H1 (cell line): ENCODE measurements at regions of chr5 and their contacts with region 1.

Region 1: GRCh38 chr5:31825518-31826068 is 186.7 kb downstream of the PDZD2 start:
- DNase-seq: peak in 1 of 2 experiments; percentile 63
- H3K4me3 ChIP-seq: no peak overlapping the region
- H3K27ac ChIP-seq: no peak overlapping the region
- H3K4me1 ChIP-seq: no peaks in the 10 kb centered on the region
- H3K27me3 ChIP-seq: no peaks in the 10 kb centered on the region
- CTCF ChIP-seq: peak in 2 of 3 experiments; percentile 68 to 75; a peak in 3 of 4 replicates
- EP300 ChIP-seq: no peak
- POLR2A ChIP-seq: no peak
- RAD21 ChIP-seq: peak; percentile 82 to 90

Region 2: DNA sequence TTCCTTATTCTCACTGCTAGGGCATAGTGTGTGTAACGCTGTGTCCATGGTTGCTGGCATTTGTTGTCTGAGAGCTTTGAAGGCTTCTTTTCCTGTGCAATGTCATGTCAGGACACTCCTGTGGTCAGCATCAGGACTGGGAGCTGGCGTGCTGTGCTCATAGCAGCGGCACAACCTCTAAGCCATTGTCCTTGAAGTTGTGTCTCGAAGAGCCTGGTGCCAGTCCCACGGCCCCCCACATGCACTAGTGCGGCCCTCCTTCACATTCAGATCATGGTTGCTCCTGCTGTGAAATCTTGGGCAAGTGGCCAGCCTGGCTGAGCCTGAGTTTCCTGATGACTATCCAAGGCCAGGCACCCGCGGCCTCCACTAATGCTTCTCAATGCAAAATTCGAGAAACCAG is 154.3 kb before region 1 on chr5:
- CTCF ChIA-PET with region 1: interaction called, 10 read pairs
- POLR2A ChIA-PET with region 1: no interaction called
- DNase-seq: no peak
- H3K4me3 ChIP-seq: no peak overlapping the region
- H3K27ac ChIP-seq: no peak overlapping the region
- H3K4me1 ChIP-seq: peaks cover 2 to 8% (median 3%) of the 10 kb centered on the region in 4 experiments; a peak in 6 of 7 replicates
- H3K27me3 ChIP-seq: no peaks in the 10 kb centered on the region
- CTCF ChIP-seq: no peak
- EP300 ChIP-seq: no peak
- POLR2A ChIP-seq: peak in 1 of 2 experiments; percentile 53; a peak in 1 of 3 replicates
- RAD21 ChIP-seq: no peak

Region 3: DNA sequence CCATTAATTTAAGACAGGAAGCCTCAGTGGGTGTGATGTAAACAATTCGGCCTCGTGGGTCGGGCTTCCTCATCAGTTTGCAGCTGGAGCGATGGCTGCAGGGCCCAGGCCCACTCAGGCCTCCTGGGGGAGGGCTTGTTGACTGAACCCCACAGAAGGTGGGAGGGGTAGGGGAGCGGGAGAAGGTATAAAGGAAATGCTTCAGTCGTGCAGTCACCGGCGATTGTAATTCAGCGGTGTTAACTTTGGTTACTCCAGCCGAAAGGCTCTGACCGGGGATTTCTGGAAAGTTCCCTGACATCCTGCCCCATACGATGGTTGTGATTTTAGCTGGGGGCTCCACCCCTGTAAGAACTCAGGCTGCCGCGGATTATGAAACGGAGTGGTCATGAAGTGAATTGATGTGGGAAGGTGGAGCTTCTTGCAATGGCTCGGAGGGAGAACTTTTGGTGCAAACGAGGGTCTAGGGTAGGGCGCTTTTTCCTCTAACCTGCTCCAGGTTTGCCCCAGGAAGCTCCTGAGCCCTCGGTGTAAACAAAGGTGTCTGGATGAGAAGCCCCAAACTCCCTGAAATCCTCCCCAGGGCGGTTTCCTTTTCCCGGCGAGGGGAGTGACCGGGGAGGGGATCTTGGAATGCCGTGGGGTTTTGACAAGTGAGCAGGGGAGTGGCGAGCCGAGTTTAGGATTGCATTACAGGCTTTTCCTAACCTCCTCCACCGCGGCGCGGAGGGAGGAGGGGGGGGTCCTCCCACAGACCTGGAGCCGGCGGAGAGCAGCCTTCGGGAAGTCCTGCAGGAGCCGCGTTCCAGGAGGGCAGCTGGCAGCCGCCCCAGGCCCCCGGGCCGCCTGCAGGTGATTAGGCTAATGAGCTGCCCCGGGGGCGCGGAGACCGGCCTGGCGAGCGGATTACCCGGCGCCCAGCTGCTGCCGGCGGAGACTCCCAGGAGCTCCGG is 28.9 kb after region 1 on chr5:
- CTCF ChIA-PET with region 1: interaction called, 42 read pairs
- POLR2A ChIA-PET with region 1: interaction called, 3 read pairs
- DNase-seq: peak; percentile 38 to 82
- H3K4me3 ChIP-seq: peak overlapping the region; percentile 54 to 79 (median 70)
- H3K27ac ChIP-seq: 0 out of 2 replicates have a peak overlapping the region, but pooled peaks have one; percentile 31
- H3K4me1 ChIP-seq: peaks cover 2 to 15% (median 10%) of the 10 kb centered on the region in 4 experiments; a peak in 5 of 7 replicates
- H3K27me3 ChIP-seq: no peaks in the 10 kb centered on the region
- CTCF ChIP-seq: no peak
- EP300 ChIP-seq: no peak
- POLR2A ChIP-seq: peak in 1 of 2 experiments; percentile 50; a peak in 2 of 3 replicates
- RAD21 ChIP-seq: no peak

Region 4: DNA sequence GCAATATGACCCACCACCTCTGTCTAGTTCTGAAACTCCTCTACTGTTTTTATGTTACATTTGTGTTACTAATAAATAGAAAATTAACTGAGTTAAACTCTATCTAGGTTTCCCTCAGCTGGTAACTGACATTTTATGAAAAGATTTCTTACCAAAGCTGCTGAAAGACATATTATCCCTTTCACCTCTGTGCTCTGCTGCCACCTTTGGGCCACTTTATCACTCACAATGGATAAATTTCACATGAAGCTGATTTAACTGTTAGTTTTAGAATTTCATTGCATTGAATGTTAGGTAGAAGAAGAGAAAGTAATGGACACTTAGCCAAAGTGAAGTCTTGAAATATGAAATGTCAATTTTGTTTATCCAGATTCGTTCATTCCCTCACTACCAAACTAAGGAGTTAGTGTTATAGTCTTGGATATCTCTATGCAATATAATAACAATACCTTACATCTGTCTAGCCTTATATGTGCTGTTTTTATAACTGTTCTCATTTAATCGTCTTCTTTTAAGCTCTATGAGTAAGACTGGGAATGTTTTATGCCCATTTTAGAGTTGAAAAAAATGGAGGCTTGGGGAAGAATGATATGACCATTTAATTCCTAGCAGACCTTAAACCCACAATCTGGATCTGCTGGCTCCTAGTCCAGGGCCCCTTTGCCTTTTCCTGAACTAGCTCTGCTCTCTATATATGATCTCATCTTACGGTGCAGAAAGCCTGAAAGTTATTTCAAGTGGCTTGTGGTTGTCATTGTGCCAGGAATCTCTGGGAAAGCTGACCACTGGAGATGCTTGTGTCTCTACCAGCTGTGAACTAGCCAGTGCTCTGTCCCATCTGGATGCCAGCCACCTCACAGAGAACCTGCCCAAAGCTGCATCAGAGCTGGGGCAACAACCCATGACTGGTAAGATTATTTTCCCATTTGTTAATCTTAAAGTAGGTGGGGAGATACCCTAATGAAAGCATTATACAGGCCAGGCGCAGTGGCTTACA is 251.4 kb after region 1 on chr5:
- CTCF ChIA-PET with region 1: interaction called, 31 read pairs
- POLR2A ChIA-PET with region 1: no interaction called
- DNase-seq: no peak
- H3K4me3 ChIP-seq: no peak overlapping the region
- H3K27ac ChIP-seq: no peak overlapping the region
- H3K4me1 ChIP-seq: no peaks in the 10 kb centered on the region
- H3K27me3 ChIP-seq: no peaks in the 10 kb centered on the region
- CTCF ChIP-seq: peak in 2 of 3 experiments; percentile 65 to 68; a peak in 3 of 4 replicates
- EP300 ChIP-seq: no peak
- POLR2A ChIP-seq: no peak
- RAD21 ChIP-seq: peak; percentile 91 to 92